Panc1 (cell line): ENCODE measurements at regions of chr16 and their contacts with region 1.

Region 1: GRCh38 chr16:31202414-31203375 is at the start of gene PYCARD:
- DNase-seq: no peak
- ATAC-seq: peak; percentile 64
- H3K4me3 ChIP-seq: peak within 1 kb of the TSS; percentile 51 to 69
- H3K27ac ChIP-seq: peak within 1 kb of the TSS; percentile 71
- H3K4me1 ChIP-seq: peaks cover 22% of the 10 kb centered on the region
- H3K27me3 ChIP-seq: no peaks in the 10 kb centered on the region
- CTCF ChIP-seq: no peak
- total RNA-seq, gene PYCARD: 99.4 TPM

Region 2: DNA sequence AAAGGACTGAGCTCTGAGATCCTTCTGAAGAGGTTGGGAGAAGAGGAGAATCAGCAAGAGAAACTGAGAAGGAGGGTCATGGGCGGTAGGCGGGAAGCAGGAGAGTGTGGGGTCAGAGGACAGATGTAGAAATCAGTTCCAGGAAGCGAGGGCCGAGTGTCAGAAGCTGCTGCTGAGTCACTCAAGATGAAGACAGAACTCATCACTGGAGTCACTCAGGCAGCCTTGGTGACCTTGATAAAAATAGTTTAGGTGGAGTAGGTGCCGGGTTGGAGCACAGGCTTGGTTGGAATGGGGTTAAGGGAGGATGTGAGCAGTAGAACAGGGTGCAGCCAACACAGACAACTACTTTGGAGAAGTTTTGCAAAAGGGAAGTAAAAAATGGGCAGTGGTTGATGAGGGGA is 50.9 kb after region 1 on chr16:
- CTCF ChIA-PET with region 1: no interaction called
- POLR2A ChIA-PET with region 1: interaction called, 17 read pairs
- in situ Hi-C with region 1: no loop called
- intact Hi-C with region 1: no loop called
- DNase-seq: no peak
- ATAC-seq: no peak
- H3K4me3 ChIP-seq: no peak overlapping the region
- H3K27ac ChIP-seq: no peak overlapping the region
- H3K4me1 ChIP-seq: no peaks in the 10 kb centered on the region
- H3K27me3 ChIP-seq: no peaks in the 10 kb centered on the region
- CTCF ChIP-seq: no peak

Region 3: GRCh38 chr16:31333686-31334649 is 131.3 kb after region 1 on chr16:
- CTCF ChIA-PET with region 1: interaction called, 6 read pairs
- POLR2A ChIA-PET with region 1: no interaction called
- in situ Hi-C with region 1: no loop called
- intact Hi-C with region 1: loop called (anchors 5 kb)
- DNase-seq: peak; percentile 27
- ATAC-seq: peak; percentile 91
- H3K4me3 ChIP-seq: no peak overlapping the region
- H3K27ac ChIP-seq: no peak overlapping the region
- H3K4me1 ChIP-seq: no peaks in the 10 kb centered on the region; the same call in 1 of the 2 replicates
- H3K27me3 ChIP-seq: peaks cover 9% of the 10 kb centered on the region
- CTCF ChIP-seq: peak; percentile 50

Region 4: DNA sequence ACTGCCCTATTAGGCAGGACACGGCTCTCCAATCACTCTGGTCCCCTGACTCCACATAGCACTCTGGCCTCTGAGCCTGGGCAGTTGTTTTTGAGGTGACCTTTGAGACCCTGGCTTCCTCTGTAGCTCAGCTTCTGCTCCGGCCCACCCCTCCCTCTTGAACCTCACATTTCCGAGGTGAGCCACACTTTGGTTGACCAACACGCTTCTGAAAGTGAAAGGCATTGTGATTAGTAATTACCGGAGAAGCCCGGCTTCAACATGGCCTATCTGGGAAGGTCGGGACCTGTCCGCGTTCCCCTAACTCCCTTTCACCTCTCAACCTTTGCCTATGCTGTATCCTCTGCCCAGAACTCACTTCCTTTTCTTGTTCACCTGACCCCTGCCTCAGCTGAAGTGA is 142.0 kb after region 1 on chr16:
- CTCF ChIA-PET with region 1: no interaction called
- POLR2A ChIA-PET with region 1: no interaction called
- in situ Hi-C with region 1: no loop called
- intact Hi-C with region 1: no loop called
- DNase-seq: no peak
- ATAC-seq: no peak
- H3K4me3 ChIP-seq: no peak overlapping the region
- H3K27ac ChIP-seq: no peak overlapping the region
- H3K4me1 ChIP-seq: no peaks in the 10 kb centered on the region
- H3K27me3 ChIP-seq: no peaks in the 10 kb centered on the region
- CTCF ChIP-seq: no peak

Region 5: GRCh38 chr16:31382485-31383161 is 179.9 kb after region 1 on chr16:
- CTCF ChIA-PET with region 1: interaction called, 3 read pairs
- POLR2A ChIA-PET with region 1: interaction called, 11 read pairs
- in situ Hi-C with region 1: no loop called
- intact Hi-C with region 1: loop called (anchors 2 kb)
- DNase-seq: peak; percentile 8
- ATAC-seq: peak; percentile 83
- H3K4me3 ChIP-seq: no peak overlapping the region
- H3K27ac ChIP-seq: no peak overlapping the region
- H3K4me1 ChIP-seq: peaks cover 11% of the 10 kb centered on the region
- H3K27me3 ChIP-seq: no peaks in the 10 kb centered on the region
- CTCF ChIP-seq: peak; percentile 96